ENCODE measurements at regions of chr9 and their contacts with region 1.

Region 1: DNA sequence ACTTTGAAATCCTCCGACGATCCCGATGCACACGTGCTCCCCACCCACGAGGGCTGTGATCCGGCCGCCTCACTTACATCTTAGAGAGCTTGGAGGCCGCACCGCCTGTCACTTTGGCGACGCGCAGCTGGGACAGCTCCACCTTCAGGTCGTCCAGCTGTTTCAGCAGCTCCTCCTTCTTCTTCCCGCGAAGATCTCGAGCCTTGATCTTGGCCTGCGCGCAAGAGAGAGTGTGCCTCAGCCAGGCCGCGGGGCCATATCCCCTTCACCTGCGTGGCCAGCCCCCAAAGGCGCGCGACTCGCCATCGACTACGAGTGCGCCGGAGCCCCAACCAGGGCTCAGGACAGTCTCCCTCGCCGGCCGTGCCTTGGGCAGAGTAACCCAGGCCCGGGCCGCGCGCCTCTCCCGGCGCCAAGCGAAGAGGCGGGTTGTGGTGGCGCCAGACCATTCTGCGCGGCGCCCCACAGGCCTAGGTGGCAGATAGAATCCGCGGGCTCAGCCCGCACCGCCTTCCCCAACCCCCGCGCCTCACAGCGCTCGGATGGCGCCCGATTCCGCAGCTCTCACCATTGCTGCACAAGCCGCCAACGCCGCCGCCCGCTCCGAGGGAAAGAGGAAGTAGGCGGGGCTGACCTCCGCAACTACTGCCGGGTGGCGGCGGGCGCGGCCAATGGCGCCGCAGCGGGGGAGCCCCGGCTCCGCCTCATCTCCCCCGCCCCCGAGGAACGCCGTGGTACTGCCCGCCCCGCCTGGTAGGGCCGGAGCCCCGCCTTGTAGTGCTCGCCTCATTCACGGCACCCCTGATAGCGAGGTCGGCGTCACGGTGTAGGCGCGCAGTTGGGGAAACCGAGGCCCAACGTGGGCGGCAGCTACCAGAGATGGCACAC is at the starts of genes ARPC5L and RPL35:
- DNase-seq: peak; percentile 91 to 92
- ATAC-seq: peak; percentile 86 to 89
- H3K4me3 ChIP-seq: peak within 1 kb of the TSS; percentile 85 to 100 (median 100)
- H3K27ac ChIP-seq: peak within 1 kb of the TSS; percentile 87 to 97 (median 92)
- H3K4me1 ChIP-seq: peaks cover 35 to 38% of the 10 kb centered on the region in 2 donors
- H3K27me3 ChIP-seq: no peaks in the 10 kb centered on the region
- CTCF ChIP-seq: peak in 2 of 5 experiments; percentile 27 to 38
- POLR2A ChIP-seq: peak; percentile 95 to 97
- total RNA-seq, gene ARPC5L: 28.9 to 47.1 (median 29.2) TPM
- total RNA-seq, gene RPL35: 2,099 to 2,608 (median 2,478) TPM

Region 2: GRCh38 chr9:124228516-124228915 is 633.1 kb before region 1 on chr9:
- in situ Hi-C with region 1: no loop called
- intact Hi-C with region 1: no loop called
- DNase-seq: no peak
- ATAC-seq: no peak
- H3K4me3 ChIP-seq: no peak overlapping the region
- H3K27ac ChIP-seq: no peak overlapping the region
- H3K4me1 ChIP-seq: peaks cover 0 to 3% of the 10 kb centered on the region in 2 donors
- H3K27me3 ChIP-seq: no peaks in the 10 kb centered on the region
- CTCF ChIP-seq: no peak
- POLR2A ChIP-seq: no peak

Region 3: GRCh38 chr9:124593651-124594058 is 267.9 kb before region 1 on chr9:
- in situ Hi-C with region 1: no loop called
- intact Hi-C with region 1: no loop called
- DNase-seq: no peak
- ATAC-seq: no peak
- H3K4me3 ChIP-seq: no peak overlapping the region
- H3K27ac ChIP-seq: no peak overlapping the region
- H3K4me1 ChIP-seq: peaks cover 3 to 16% of the 10 kb centered on the region in 2 donors
- H3K27me3 ChIP-seq: no peaks in the 10 kb centered on the region
- CTCF ChIP-seq: no peak
- POLR2A ChIP-seq: no peak

Region 4: DNA sequence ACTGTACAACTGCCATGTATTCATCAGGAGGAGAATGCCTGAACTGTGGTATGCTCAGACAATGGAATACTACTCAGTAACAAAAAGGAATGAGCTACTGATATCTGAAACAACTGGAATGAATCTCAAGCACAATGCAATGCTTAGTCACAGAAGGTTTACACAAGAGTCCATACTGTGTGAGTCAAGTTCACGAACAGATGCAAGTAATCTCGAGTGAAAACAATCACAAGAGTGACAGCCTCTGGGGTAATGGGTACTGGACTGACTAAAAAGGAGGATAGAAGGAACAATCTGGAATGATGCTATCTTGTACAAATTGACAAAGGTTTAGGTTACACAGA is 98.8 kb after region 1 on chr9:
- in situ Hi-C with region 1: no loop called
- intact Hi-C with region 1: no loop called
- DNase-seq: no peak
- ATAC-seq: no peak
- H3K4me3 ChIP-seq: no peak overlapping the region
- H3K27ac ChIP-seq: no peak overlapping the region
- H3K4me1 ChIP-seq: no peaks in the 10 kb centered on the region
- H3K27me3 ChIP-seq: no peaks in the 10 kb centered on the region
- CTCF ChIP-seq: no peak
- POLR2A ChIP-seq: no peak

Region 5: DNA sequence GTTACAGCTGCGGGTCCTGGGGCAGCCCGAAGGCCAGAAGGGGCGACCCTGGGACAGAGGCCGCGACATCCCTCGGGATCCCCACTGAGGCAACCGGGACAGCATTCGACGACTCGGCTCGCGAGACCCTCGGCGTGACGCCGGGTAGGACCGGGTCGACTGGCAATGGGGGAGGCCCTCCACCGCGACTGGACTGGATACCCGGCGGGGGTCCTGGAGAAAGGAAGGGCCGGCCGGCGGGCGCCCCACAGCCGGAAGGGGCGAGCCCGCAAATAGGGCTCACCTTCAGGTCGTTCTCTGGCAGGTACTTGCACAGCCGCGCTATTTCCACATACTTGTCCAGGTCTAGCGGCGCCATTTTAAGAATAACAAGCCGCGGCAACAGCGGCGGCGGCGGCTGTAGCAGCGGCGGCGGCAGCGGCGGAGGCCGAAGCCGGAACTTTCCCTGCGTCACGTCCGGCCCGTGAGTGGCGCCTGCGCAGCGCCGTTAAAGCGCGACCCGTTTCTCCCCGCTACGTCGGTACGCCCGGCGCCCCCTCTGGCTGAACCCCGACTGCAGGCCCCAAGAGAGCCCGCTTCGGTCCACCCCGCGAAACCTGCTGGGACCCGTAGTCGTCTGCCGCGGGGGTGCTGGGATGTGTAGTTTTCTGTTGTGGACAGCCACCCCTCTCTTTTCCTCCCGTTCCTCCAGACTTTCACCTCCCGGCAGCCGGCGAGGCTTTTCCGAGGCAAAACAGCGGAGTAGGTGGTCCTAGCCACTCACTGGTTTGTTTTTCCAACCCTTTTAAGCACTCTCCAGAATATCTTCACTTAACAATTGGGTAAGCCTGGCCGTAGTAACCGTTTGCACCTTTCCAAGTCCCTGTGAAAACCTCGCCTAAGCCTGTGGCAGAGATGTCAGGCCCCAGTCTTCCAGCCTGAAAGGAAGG is 328.0 kb after region 1 on chr9 and contains the start of gene PPP6C:
- in situ Hi-C with region 1: no loop called
- intact Hi-C with region 1: loop called (anchors 10 kb)
- DNase-seq: peak; percentile 96 to 98
- ATAC-seq: peak; percentile 91 to 94
- H3K4me3 ChIP-seq: peak within 1 kb of the TSS; percentile 70 to 100 (median 97)
- H3K27ac ChIP-seq: peak within 1 kb of the TSS; percentile 89 to 100 (median 98)
- H3K4me1 ChIP-seq: peaks cover 39 to 44% of the 10 kb centered on the region in 2 donors
- H3K27me3 ChIP-seq: no peaks in the 10 kb centered on the region
- CTCF ChIP-seq: peak in 4 of 5 experiments; percentile 68 to 75 (median 70)
- POLR2A ChIP-seq: peak; percentile 93 to 96
- total RNA-seq, gene PPP6C: 49.4 to 80.6 (median 73.6) TPM